Posterior vena cava (tissue), 2 donors: ENCODE measurements at regions of chr10 and their contacts with region 1.

Region 1: DNA sequence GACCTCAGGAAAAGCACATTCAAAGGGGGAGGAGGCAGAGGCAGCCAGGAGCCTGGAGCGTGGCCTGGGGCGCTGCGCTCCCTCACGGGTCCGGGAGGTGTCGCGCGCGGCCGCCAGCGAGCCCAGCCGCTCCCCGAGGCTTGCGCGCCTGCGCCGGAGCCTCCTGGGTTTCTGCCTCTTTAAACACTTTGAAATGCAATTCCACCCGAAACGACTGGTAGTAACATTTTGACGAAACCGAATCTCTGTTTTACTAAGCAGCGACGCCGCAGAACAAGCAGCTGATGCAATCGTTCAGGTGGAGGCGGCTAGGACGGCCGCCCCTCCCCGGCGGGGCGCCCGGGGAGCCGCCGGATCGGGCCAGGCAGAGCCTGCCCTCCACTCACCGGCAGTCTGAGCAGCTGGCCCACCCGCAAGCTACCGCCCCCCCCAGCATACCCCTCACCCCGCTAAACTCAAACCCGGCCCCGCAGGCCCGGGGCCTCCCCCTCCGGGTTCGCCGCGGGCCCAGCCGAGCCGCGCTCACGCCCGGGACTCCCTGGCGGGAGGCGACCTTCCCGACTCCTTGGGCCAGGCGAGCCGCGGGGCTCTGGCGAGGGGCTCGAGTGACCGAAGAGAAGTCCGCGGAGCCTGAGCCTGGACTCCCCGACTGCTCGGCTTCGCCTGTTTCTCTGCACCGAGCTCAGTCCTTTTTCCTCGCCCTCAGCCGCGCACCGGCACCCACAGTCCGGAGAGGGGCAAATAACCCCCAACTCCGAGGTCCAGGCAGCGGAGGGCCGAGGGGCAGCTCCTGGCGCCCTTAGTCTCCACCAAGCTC is 3.2 kb downstream of the MKX start:
- DNase-seq: peak; percentile 94

Region 2: GRCh38 chr10:27724287-27724686 is 18.1 kb before region 1 on chr10:
- intact Hi-C with region 1: loop called in 1 of 2 experiments (anchors 2 kb)
- DNase-seq: no peak

Region 3: DNA sequence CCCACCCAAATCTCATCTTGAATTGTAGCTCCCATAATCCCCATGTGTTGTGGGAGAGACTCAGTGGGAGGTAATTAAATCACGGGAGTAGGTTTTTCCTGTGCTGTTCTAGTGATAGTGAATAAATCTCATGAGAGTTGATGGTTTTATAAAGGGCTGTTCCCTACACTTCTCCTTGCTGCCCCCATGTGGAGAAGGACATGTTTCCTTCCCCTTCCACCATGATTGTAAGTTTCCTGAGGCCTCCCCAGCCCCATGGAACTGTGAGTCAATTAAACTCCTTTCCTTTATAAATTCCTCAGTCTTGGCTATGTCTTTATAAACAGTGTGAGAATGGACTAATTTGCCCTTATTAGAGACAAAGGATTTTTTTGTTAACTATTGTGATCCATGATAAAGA is 51.8 kb after region 1 on chr10:
- intact Hi-C with region 1: loop called in 1 of 2 experiments (anchors 1 kb)
- DNase-seq: no peak

Region 4: DNA sequence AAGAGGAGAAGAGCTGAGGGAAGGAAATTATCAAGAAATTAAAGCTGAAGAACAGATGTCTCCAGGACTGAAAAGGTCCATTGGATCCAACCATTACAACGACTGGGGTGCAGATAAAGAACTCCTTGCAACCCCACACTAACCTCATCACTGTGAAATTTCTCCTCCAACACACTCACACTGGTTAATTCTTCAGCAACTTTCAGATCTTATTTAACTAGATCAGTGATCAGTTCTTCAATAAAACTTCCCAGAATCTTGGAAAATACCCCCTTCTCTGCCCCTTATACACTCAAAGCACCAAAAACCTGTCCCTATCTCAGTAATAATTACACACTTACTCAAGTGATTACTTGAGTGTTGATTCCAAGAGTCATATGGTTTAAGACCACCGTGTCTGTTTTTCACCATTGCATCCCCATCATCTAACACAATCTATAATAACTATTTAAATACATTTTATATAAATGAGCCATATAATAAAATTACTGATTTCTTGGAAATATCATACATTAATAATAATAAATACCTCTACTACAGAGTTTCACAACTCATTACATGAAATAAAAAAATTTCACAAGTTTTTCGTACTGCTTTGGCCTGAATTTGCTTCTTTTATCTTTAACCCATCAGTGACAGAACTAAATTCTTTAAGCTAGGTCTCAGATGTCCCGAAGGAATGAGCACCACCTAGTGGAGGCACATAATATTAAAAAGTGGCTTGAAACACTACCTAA is 436.8 kb after region 1 on chr10:
- intact Hi-C with region 1: loop called (anchors 5 to 10 kb)
- DNase-seq: no peak

Region 5: DNA sequence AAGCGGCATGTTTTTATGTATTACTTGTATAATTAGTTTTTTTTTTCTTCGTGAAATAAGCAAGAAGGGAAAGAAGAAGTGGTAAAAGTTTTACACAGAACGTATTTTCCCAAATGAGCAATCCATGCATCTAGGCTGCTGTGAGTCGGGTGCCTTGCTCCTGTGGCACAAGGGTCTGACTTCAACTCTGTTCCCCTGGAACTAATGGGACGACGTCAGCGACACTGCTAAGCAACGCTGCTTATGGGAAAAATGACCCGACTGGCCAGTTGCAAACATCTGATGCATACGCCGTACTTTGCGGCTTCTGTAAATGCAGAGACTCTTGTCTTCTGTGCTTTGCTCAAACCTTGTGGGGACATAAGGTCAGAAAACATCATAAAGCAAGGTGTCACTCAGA is 494.2 kb after region 1 on chr10:
- intact Hi-C with region 1: loop called in 1 of 2 experiments (anchors 5 kb)
- DNase-seq: no peak

Region 6: DNA sequence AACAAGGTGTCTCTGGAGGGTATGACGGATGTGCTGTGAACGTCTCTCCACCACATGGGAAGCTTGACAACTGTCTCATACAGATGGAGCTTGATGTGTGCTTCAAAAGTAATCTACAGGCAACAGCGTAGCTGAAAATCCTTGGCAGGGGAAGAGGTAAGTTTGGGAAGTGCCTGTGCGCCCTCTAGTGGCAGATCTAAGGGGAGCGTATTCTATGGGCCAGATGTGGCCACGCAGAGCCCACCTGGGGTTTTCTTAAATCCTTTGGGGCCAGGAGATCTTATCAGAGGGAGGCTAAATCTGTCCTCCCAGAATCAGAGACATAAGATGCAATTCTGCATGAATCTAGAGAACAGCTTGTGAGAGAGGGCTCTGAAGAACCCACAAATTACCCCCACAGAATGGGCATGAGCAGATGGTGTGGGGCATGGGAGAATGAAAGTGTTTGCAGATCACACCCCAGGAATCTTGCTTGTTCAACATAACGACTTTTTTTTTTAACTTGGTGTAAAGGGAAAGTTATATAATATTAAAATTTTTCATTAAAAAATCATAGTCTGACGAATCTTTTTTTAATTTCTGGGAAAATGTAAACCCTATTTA is 651.7 kb after region 1 on chr10:
- intact Hi-C with region 1: loop called in 1 of 2 experiments (anchors 10 kb)
- DNase-seq: peak; percentile 85

Region 7: DNA sequence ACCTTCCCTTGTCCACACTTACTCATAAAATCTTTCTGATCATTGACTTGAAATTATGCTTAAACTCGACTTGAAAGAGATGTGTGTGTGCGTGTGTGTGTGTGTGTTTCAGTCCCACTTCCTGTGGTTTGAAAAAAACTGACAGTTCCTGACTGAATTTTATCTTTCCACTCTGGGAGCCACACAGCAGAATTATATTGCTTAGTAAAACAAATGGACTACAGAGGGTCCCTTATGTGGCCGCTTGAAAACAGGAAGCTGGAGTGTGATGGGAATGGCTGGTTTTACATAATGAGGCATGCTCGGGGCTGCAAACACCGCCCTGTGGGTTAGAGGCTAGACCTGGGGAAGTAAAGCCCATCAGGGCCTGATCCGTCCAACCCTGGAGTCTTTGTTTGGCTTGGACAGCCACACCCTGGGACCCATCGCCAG is 1601.2 kb after region 1 on chr10:
- intact Hi-C with region 1: no loop called
- DNase-seq: no peak